Common myeloid progenitor, CD34-positive (primary cell): ENCODE measurements at regions of chr3 and their contacts with region 1.

Region 1: DNA sequence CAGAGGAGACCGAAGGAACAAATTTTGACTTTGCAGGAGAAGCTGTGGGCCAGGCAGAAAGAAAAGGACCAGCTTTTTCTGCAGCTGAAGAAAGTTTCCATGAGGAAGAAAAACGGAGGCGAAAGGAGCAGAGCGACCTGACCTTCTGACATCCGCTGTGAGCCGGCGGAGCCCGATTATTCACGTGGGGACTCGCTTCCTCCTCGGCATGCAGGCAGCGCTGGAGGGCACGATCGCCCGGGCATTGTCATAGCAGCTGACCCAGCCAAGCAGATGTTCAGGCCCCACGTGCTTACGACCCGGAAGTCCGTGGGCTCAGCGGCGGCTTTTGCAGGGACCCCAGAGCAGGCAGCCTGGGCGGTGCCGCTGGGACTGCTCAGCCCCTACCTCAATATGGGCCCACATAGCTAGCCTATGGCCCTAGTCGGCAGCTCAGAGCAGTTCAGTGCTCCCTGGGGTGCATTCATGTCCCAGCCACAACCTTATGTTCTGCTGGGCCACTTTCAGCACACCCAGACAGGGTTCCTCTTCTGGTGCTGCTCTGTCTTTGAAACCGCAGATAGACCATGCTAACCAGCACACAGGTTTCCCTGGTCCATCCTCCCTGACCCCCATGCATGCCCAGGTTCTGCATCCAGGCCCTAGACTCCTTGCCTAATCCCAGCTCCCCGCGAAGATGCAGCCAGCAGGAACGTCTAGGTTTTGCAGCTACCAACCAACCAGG is 10.5 kb upstream of the EIF4A2 start:
- DNase-seq: peak; percentile 50 to 88 (median 78)
- H3K4me3 ChIP-seq: peak overlapping the region; percentile 38 to 86 (median 71)
- H3K27ac ChIP-seq: no peak overlapping the region
- H3K4me1 ChIP-seq: peaks cover 0 to 17% (median 14%) of the 10 kb centered on the region in 4 experiments
- H3K27me3 ChIP-seq: no peaks in the 10 kb centered on the region

Region 2: GRCh38 chr3:186705882-186706780 is 66.7 kb before region 1 on chr3:
- CTCF ChIA-PET with region 1: no interaction called
- POLR2A ChIA-PET with region 1: no interaction called
- DNase-seq: peak; percentile 56 to 91 (median 91)
- H3K4me3 ChIP-seq: no peak overlapping the region
- H3K27ac ChIP-seq: no peak overlapping the region
- H3K4me1 ChIP-seq: peaks cover 3 to 9% (median 9%) of the 10 kb centered on the region in 4 experiments
- H3K27me3 ChIP-seq: peaks cover 0 to 5% (median 0%) of the 10 kb centered on the region in 5 experiments

Region 3: DNA sequence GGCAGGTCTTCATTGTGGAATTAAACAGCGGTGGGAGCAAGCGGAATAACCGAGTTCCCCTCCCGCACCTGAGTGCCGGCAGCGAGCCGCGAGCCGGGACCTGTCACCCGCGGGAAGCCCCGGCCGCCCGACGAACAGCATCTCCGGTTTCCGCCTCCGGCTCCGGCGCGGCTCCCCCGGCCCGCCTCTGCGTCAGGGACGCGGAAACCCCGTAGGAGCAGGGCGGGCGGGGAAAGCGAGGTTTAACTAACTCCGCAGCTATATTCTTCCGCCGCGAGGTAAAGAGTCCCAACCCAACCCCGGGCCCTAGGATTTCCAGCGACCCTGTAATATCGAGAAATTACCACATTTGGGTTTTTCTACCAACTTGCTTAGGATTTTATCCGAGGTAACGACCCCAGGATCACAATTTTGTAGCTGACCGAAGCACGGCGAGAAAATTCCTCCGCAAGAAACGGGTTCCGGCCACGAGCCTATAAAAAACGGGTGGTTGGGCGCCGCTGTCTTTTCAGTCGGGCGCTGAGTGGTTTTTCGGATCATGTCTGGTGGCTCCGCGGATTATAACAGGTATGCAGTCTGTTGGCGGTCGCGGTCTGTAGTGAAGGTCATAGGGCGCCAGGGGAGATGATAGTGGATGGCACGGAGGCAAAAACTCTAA is 10.3 kb after region 1 on chr3 and contains the start of gene EIF4A2:
- CTCF ChIA-PET with region 1: interaction called, 9 read pairs
- POLR2A ChIA-PET with region 1: interaction called, 32 read pairs
- DNase-seq: peak; percentile 92 to 94 (median 94)
- H3K4me3 ChIP-seq: peak within 1 kb of the TSS; percentile 93 to 100 (median 97)
- H3K27ac ChIP-seq: peak within 1 kb of the TSS; percentile 97 to 98
- H3K4me1 ChIP-seq: peaks cover 18 to 38% (median 32%) of the 10 kb centered on the region in 4 experiments
- H3K27me3 ChIP-seq: no peaks in the 10 kb centered on the region